ENCODE measurements at regions of chr12 and their contacts with region 1.

Region 1: GRCh38 chr12:50084775-50085614 is at the start of gene SMARCD1:
- DNase-seq: peak; percentile 90
- H3K4me3 Mint-ChIP-seq: peak within 1 kb of the TSS; percentile 87
- H3K27ac Mint-ChIP-seq: peak within 1 kb of the TSS; percentile 90
- H3K4me1 Mint-ChIP-seq: peaks cover 33% of the 10 kb centered on the region
- H3K27me3 Mint-ChIP-seq: no peaks in the 10 kb centered on the region
- CTCF ChIP-seq: no peak
- total RNA-seq, gene SMARCD1: 57.4 and 58.7 TPM in 2 replicates

Region 2: GRCh38 chr12:49974231-49974675 is 110.7 kb before region 1 on chr12:
- CTCF ChIA-PET with region 1: no interaction called
- POLR2A ChIA-PET with region 1: no interaction called
- intact Hi-C with region 1: no loop called
- DNase-seq: no peak
- H3K4me3 Mint-ChIP-seq: no peak overlapping the region
- H3K27ac Mint-ChIP-seq: no peak overlapping the region
- H3K4me1 Mint-ChIP-seq: no peaks in the 10 kb centered on the region
- H3K27me3 Mint-ChIP-seq: no peaks in the 10 kb centered on the region
- CTCF ChIP-seq: no peak

Region 3: GRCh38 chr12:50167041-50167828 is 82.2 kb after region 1 on chr12 and contains the start of gene CERS5:
- CTCF ChIA-PET with region 1: interaction called, 6 read pairs
- POLR2A ChIA-PET with region 1: interaction called, 25 read pairs
- intact Hi-C with region 1: no loop called
- DNase-seq: peak; percentile 99
- H3K4me3 Mint-ChIP-seq: peak within 1 kb of the TSS; percentile 79
- H3K27ac Mint-ChIP-seq: peak within 1 kb of the TSS; percentile 79
- H3K4me1 Mint-ChIP-seq: peaks cover 12% of the 10 kb centered on the region
- H3K27me3 Mint-ChIP-seq: no peaks in the 10 kb centered on the region
- CTCF ChIP-seq: peak; percentile 9
- total RNA-seq, gene CERS5: 56.8 and 58.1 TPM in 2 replicates

Region 4: GRCh38 chr12:50442178-50442908 is 357.3 kb after region 1 on chr12:
- CTCF ChIA-PET with region 1: no interaction called
- POLR2A ChIA-PET with region 1: no interaction called
- intact Hi-C with region 1: no loop called
- DNase-seq: no peak
- H3K4me3 Mint-ChIP-seq: no peak overlapping the region
- H3K27ac Mint-ChIP-seq: peak overlapping the region; percentile 49
- H3K4me1 Mint-ChIP-seq: peaks cover 10% of the 10 kb centered on the region
- H3K27me3 Mint-ChIP-seq: no peaks in the 10 kb centered on the region
- CTCF ChIP-seq: no peak